IMR-90 (cell line): ENCODE measurements at regions of chr4 and their contacts with region 1.

Region 1: DNA sequence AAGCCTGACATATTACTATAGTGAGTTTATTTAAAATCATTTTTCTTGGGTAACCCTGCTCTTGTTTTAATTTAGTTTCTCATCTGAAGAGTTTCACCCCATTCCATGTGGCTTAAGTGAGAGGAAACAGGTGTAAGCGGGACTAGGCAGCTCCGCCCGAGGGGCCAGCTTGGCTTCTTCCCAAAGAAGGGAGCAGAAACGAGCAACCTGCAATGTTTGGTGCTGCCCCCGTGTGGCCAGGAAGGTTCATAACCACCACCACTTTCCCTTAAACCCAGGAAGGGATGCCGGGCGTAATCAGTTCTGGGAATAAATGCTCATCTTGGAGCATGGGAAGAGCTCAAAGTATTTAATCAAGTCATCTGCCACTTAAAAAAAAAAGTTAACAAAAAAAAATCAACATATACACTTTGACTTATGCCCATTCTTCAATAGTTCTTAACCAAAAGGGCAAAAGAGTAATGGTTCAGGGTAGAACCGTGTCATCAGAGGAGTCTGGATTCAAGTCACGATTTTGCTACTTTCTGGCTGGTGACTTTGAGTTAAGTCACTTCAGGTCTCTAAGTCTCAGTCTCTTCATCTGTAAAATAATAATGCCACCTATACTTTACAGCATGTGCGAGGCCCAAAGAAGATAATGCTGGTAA is 147.9 kb downstream of the NSUN7 start:
- DNase-seq: peak; percentile 51
- ATAC-seq: peak; percentile 74
- H3K4me3 ChIP-seq: no peak overlapping the region
- H3K27ac ChIP-seq: no peak overlapping the region
- H3K4me1 ChIP-seq: peaks cover 2% of the 10 kb centered on the region
- H3K27me3 ChIP-seq: no peaks in the 10 kb centered on the region
- CTCF ChIP-seq: peak; percentile 62
- POLR2A ChIP-seq: no peak
- RAD21 ChIP-seq: peak; percentile 50

Region 2: GRCh38 chr4:40887288-40888131 is 10.2 kb before region 1 on chr4:
- CTCF ChIA-PET with region 1: interaction called, 7 read pairs
- POLR2A ChIA-PET with region 1: interaction called, 12 read pairs
- dilution Hi-C with region 1: no loop called
- in situ Hi-C with region 1: no loop called
- intact Hi-C with region 1: no loop called
- DNase-seq: peak; percentile 92
- ATAC-seq: peak; percentile 90
- H3K4me3 ChIP-seq: no peak overlapping the region
- H3K27ac ChIP-seq: peak overlapping the region; percentile 52; the same call in 1 of the 2 replicates
- H3K4me1 ChIP-seq: peaks cover 5% of the 10 kb centered on the region
- H3K27me3 ChIP-seq: no peaks in the 10 kb centered on the region
- CTCF ChIP-seq: no peak
- POLR2A ChIP-seq: no peak
- RAD21 ChIP-seq: no peak